HepG2 (cell line): ENCODE measurements at regions of chr12 and their contacts with region 1.

Region 1: DNA sequence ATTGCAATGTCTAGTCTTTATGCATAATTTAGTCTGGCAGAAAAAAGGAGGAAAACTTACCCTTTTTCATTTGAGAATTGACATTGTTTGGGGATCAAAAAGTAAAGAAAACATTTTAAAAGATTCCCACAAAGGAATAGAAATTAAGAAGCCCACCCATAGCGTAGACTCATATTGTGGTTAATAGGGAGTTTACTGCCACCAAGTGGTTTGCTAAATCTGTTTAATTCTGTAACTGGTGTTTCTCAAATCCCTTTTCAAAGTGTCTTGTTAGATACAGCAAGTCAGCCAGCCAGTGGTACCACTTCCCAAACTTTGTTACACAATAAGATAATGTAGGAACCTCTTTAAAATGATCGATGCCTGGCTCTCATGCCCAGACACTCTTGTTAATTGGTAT is 180.3 kb downstream of the IPO8 start:
- DNase-seq: peak; percentile 10
- ATAC-seq: no peak
- H3K4me3 ChIP-seq: no peak overlapping the region
- H3K27ac ChIP-seq: no peak overlapping the region
- H3K4me1 ChIP-seq: peaks cover 41% of the 10 kb centered on the region
- H3K27me3 ChIP-seq: no peaks in the 10 kb centered on the region; a peak in 1 of 5 replicates
- CTCF ChIP-seq: peak; percentile 57
- EP300 ChIP-seq: no peak
- POLR2A ChIP-seq: no peak
- RAD21 ChIP-seq: no peak

Region 2: DNA sequence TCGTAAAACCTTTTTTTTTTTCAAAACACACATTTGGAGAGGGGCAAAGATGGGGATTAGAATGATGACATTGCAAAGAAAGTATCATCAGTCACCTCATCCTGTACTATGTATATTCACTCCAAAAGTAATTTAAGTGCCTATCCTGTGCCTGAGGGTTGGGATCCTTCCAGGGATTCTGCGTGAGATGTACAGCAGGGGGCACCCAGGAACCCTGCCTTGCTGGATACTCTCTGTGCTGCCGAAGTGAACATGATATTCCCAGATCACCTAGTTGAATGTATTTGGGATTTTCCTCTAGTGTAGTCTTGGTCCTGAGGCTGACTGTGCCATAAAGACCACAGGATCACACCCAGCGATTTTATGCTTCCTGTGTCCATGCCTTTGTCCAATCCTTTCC is 192.3 kb before region 1 on chr12:
- CTCF ChIA-PET with region 1: no interaction called
- POLR2A ChIA-PET with region 1: no interaction called
- in situ Hi-C with region 1: no loop called
- intact Hi-C with region 1: loop called (anchors 1 kb)
- DNase-seq: no peak
- ATAC-seq: peak; percentile 60; the same call in 2 of the 3 replicates
- H3K4me3 ChIP-seq: no peak overlapping the region
- H3K27ac ChIP-seq: no peak overlapping the region
- H3K4me1 ChIP-seq: no peaks in the 10 kb centered on the region
- H3K27me3 ChIP-seq: peaks cover 0 to 4% of the 10 kb centered on the region in 2 experiments; a peak in 1 of 5 replicates
- CTCF ChIP-seq: peak; percentile 53
- EP300 ChIP-seq: no peak
- POLR2A ChIP-seq: no peak
- RAD21 ChIP-seq: no peak

Region 3: DNA sequence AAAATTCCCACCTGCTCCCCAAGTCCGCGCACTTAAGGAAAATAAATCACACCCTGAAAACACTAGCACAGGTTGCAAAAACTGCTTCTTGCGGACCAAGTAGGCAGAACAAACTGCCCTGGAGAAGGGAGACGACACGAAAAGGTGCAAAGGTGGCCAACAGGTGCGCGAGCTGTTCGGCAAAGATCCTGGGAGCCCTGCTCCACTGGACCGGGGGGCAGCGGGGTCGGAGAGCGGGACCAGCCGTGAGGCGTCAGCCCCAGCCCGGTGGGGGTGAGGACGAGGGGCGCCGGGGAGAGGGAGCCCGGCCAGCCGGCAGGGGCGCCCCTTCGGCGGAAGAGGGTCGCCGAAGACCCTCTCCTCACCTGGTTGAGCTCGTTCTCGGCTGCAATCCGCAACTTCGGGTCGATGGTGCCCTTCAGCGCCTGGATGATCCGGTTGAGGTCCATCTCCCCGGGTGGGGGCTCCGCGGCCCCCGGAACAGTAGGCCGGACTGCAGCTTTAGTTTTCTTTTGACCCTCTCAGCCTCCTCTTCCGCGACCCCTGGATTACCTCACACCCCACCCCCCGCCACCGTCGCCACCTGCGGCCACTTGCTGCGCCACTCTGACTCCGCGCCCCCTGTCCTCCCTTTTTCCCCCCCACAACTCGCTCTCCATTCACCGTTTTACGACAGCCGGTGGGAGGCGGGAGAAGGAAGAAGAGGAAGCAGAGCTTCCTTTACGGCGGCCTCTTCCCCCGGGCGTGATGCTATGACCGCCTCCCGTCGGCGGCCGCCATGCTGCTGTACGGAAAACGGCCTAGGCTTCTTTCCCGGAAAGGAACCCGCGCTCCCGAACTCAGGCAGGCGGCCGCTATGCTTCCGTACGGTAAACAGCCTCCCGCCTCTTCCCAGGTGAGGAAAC is 180.1 kb after region 1 on chr12 and contains the start of gene IPO8:
- CTCF ChIA-PET with region 1: no interaction called
- POLR2A ChIA-PET with region 1: no interaction called
- in situ Hi-C with region 1: no loop called
- intact Hi-C with region 1: loop called (anchors 10 kb)
- DNase-seq: peak; percentile 93
- ATAC-seq: peak; percentile 89
- H3K4me3 ChIP-seq: peak within 1 kb of the TSS; percentile 93 to 99 (median 96)
- H3K27ac ChIP-seq: peak within 1 kb of the TSS; percentile 84
- H3K4me1 ChIP-seq: peaks cover 49% of the 10 kb centered on the region
- H3K27me3 ChIP-seq: no peaks in the 10 kb centered on the region; a peak in 1 of 5 replicates
- CTCF ChIP-seq: peak; percentile 1; the same call in 1 of the 2 replicates
- EP300 ChIP-seq: no peak
- POLR2A ChIP-seq: peak; percentile 48 to 49; a peak in 3 of 4 replicates
- RAD21 ChIP-seq: no peak
- total RNA-seq, gene IPO8: 21.8 and 40.0 TPM in 2 replicates